GM10248 (cell line): ENCODE measurements at regions of chr17 and their contacts with region 1.

Region 1: DNA sequence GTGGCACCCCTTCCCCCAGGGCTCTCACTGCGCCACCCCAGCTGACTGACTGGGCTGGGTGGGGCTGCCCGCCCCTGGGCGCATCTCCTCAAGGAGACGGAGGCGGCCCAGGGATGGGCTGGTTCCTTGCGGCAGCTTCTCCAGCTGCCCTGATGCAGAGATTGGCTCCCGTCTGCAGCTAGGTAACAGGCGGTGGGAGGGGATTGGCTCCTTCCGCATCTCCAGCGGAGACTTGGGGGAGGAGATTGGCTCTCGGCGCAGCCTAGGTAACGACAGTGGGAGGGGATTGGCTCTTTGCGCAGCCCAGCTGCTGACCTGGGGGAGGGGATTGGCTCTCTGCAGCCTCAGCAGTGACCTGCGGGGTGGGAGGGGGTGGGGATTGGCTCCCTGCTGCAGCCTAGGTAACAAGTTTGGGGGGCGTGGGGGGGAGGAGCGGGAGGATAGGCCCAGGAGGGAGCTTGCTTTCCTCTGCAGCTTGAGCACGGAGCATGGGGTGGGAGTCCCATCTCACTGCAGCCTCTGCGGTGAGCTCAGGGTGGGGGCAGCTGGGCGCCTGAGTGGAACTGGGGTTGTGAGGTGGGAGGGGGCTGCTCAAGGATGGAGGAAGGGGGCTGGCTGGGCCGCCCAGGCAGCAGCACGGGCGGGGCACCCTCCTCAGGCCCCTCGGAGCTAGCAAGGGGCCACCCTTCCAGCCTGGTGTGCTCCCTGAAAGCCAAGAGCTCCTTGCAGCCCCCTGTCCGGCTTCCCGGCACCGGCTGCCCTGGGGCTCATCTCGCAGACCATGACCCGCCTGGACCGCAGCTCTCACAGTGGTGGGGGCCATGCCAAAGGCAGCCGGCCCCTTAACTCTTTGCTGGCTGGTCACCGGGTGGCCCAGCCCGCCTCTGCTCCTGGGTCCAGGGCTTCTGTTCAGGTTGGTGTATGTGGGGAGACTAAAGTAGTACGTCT is 6.4 kb downstream of the NFE2L1 start:
- DNase-seq: no peak
- CTCF ChIP-seq: no peak

Region 2: DNA sequence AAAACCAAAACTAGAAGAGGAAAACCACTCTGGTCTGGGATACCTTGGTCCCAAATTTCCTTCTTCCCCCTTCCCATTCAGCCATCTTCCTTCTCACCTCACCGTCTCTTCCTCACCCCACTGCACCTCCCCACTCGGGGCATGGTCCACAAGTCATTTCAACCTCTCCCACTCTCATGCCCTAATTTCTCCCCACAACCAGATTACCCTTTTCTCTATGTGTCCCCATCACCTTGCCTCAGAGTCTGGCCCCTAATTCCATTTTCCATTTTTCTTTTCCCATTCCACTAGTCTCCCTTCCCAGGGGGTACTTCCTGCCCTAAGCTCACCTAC is 113.6 kb before region 1 on chr17:
- CTCF ChIA-PET with region 1: no interaction called
- POLR2A ChIA-PET with region 1: no interaction called
- DNase-seq: no peak
- CTCF ChIP-seq: no peak

Region 3: GRCh38 chr17:48068491-48068961 is 14.0 kb after region 1 on chr17:
- CTCF ChIA-PET with region 1: interaction called, 214 read pairs
- POLR2A ChIA-PET with region 1: interaction called, 3 read pairs
- DNase-seq: no peak
- CTCF ChIP-seq: no peak

Region 4: DNA sequence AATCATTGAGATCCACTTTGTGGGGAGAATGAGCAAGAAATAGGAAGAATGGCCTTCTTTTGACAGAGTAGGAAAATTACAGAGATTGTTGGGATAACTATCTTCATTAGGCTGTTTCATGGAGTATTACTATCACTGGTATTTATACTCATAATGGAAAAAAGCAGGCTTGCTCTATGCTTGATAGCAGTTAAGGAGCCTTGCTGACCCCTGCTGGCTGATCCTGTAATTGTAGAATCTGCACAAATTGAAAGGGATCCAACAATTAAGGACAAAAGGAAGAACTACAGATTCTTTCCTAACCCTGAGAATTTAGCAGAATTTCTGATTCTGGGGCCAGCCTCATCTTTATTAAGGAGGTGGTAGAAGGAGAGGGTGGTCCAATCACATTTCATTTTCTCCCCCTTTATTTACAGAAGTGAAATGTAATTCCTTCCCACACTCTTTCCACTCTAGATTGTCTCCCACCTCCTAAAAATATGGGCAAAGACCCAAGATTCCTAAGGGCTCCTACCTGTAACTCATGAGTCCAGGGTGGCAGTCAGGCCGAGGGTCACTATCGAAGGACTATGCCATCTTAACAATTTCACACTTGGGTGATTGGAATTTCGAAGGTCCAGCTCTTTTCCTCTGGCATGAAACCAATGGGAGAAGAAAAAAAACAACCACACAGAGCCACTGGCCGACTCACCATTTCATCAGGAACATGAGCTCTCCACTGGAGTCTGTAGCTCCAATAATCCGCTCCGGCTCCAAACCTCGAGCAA is 20.0 kb after region 1 on chr17:
- CTCF ChIA-PET with region 1: interaction called, 214 read pairs
- POLR2A ChIA-PET with region 1: interaction called, 3 read pairs
- DNase-seq: peak; percentile 64
- CTCF ChIP-seq: peak; percentile 81